ENCODE measurements at regions of chr11 and their contacts with region 1.

Region 1: GRCh38 chr11:47869546-47870393 is 21.6 kb upstream of the NUP160 start:
- DNase-seq: no peak
- H3K4me3 ChIP-seq: no peak overlapping the region
- H3K27ac ChIP-seq: peak overlapping the region in 1 of 4 donors; percentile 8
- H3K4me1 ChIP-seq: peaks cover 0 to 8% (median 0%) of the 10 kb centered on the region in 4 donors
- H3K27me3 ChIP-seq: no peaks in the 10 kb centered on the region
- CTCF ChIP-seq: no peak
- EP300 ChIP-seq: no peak
- POLR2A ChIP-seq: no peak

Region 2: GRCh38 chr11:46200537-46201281 is 1669.1 kb before region 1 on chr11:
- in situ Hi-C with region 1: no loop called
- intact Hi-C with region 1: loop called (anchors 5 kb)
- DNase-seq: no peak
- H3K4me3 ChIP-seq: no peak overlapping the region
- H3K27ac ChIP-seq: no peak overlapping the region
- H3K4me1 ChIP-seq: no peaks in the 10 kb centered on the region
- H3K27me3 ChIP-seq: no peaks in the 10 kb centered on the region
- CTCF ChIP-seq: no peak
- EP300 ChIP-seq: no peak
- POLR2A ChIP-seq: no peak

Region 3: DNA sequence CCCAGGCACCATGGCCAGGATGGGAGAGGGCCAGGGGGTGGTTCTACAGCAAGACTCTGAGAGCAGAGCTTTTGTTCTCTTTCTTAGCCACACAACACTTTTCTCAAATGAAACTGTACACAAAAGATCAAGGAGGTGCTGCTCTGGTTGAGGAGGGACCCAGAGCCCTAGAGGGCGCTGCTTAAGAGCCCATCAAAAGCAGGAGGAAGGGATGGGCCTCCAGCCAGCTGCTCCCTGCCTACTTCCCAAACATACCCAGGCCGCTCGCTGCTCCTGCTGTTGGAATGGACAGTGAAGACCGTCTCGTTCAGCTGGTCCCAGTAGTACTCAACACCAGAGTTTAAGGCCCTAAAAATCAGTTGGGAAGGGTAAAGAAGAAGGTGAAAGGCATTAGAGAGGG is 1459.7 kb before region 1 on chr11:
- in situ Hi-C with region 1: no loop called
- intact Hi-C with region 1: no loop called
- DNase-seq: no peak
- H3K4me3 ChIP-seq: no peak overlapping the region
- H3K27ac ChIP-seq: no peak overlapping the region
- H3K4me1 ChIP-seq: no peaks in the 10 kb centered on the region
- H3K27me3 ChIP-seq: no peaks in the 10 kb centered on the region
- CTCF ChIP-seq: no peak
- EP300 ChIP-seq: no peak
- POLR2A ChIP-seq: no peak

Region 4: DNA sequence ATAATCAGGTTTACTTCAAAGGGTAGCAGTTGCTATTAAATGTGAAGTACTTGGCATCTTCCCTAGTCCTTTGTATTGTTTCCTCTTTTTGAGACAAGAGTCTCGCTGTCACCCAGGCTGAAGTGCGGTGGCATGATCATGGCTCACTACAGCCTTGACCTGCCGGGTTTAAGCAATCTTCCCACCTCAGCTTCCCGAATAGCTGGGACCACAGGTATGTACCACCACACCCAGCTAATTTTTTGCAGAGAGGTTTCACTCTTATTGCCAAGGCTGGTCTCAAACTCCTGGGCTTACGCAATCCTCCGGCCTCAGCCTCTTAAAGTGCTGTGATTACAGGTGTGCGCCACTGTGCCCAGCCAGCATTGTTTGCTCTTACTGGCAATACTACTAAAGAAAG is 384.7 kb before region 1 on chr11:
- in situ Hi-C with region 1: no loop called
- intact Hi-C with region 1: no loop called
- DNase-seq: no peak
- H3K4me3 ChIP-seq: no peak overlapping the region
- H3K27ac ChIP-seq: no peak overlapping the region
- H3K4me1 ChIP-seq: peaks cover 13 to 21% (median 15%) of the 10 kb centered on the region in 4 donors
- H3K27me3 ChIP-seq: no peaks in the 10 kb centered on the region
- CTCF ChIP-seq: no peak
- EP300 ChIP-seq: no peak
- POLR2A ChIP-seq: no peak

Measured in transverse colon (tissue), 4 donors.